ENCODE measurements at regions of chr1 and their contacts with region 1.

Region 1: GRCh38 chr1:119372490-119373086 is 4.0 kb downstream of the HAO2 start:
- DNase-seq: peak; percentile 69
- ATAC-seq: peak; percentile 93
- H3K4me3 Mint-ChIP-seq: no peak overlapping the region
- H3K27ac Mint-ChIP-seq: peak overlapping the region; percentile 3; the same call in 1 of the 2 replicates
- H3K4me1 Mint-ChIP-seq: peaks cover 36% of the 10 kb centered on the region
- H3K27me3 Mint-ChIP-seq: peaks cover 3% of the 10 kb centered on the region; the same call in 1 of the 2 replicates
- CTCF ChIP-seq: no peak

Region 2: DNA sequence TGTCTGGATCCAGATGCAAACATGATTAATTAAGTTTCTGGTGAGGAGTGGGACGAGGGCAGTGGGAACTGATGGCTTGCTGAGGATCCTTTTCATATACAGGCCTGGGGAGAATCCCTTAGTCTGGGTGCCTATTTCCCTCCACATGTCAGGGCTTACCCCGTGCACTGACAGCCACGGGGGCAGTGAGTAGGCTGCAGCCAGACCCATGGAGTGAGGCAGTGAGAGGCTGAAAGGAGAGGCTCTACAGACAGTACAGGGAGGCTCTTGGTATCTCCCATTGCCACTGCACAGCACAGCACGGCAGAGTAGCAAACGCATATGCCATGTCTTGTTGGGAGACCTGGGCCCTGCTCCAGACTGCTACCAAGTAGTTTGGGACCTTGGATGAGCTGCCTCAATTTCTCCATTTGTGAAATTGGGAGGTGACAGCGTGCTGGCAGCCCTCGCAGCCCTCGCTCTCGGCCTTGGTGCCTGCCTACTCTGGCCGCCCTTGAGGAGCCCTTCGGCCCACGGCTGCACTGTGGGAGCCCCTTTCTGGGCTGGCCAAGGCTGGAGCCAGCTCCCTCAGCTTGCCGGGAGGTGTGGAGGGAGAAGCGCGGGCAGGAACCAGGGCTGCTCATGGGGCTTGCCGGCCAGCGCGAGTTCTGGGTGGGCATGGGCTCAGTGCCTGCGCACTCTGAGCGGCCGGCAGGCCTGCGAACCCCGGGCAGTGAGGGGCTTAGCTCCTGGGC is 39.3 kb before region 1 on chr1:
- CTCF ChIA-PET with region 1: no interaction called
- POLR2A ChIA-PET with region 1: no interaction called
- DNase-seq: no peak
- ATAC-seq: no peak
- H3K4me3 Mint-ChIP-seq: no peak overlapping the region
- H3K27ac Mint-ChIP-seq: peak overlapping the region; percentile 99
- H3K4me1 Mint-ChIP-seq: peaks cover 64% of the 10 kb centered on the region
- H3K27me3 Mint-ChIP-seq: peaks cover 3% of the 10 kb centered on the region
- CTCF ChIP-seq: no peak

Region 3: DNA sequence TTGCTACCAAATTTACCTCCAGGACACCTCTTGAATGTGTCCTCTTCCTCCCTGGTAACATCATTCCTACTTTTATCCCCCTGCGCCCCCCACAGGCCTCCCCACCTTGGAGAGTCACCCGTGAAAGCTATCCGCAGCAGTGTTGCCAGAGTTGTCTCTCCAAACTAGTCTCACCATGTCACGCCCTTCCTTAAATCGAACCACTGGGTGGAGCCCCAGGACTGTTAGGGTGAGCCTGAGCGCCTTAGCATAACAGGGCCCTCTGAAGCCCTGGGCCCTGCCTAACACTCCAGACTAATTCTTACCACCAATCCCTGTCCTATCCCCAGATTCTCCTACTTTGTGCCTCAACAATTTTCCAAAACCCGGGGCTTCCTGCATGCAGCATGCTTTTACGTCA is 77.4 kb after region 1 on chr1:
- CTCF ChIA-PET with region 1: interaction called, 14 read pairs
- POLR2A ChIA-PET with region 1: no interaction called
- DNase-seq: peak; percentile 71
- ATAC-seq: peak; percentile 97
- H3K4me3 Mint-ChIP-seq: no peak overlapping the region
- H3K27ac Mint-ChIP-seq: no peak overlapping the region
- H3K4me1 Mint-ChIP-seq: peaks cover 15% of the 10 kb centered on the region
- H3K27me3 Mint-ChIP-seq: peaks cover 4% of the 10 kb centered on the region
- CTCF ChIP-seq: no peak

Region 4: DNA sequence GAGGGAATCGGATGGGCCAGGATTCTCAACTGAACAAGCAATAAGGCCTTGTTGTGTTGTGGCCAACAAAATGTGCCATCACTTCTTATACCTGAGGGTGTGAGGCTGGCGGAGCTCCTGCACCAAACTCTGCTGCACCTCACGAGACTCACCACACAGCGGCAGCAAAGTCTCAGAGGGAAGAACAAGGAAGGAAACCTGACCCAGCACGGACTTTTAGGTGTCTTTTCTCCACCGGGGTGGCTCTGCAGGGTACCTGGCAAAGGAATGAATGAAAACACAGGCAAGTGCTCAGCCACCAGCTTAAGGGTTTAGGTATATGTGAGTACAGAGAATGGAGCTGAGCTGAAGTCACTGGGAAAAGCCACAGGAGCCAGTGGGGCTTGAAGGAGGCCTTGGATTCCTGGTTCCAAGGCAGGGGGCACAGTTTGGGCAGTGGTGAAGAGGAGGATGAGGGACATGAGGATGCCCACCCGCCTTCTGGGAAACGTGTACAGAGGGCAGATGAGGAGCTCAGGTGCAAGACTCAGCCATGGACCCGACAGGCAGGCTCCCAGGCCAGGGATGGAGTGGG is 103.4 kb after region 1 on chr1:
- CTCF ChIA-PET with region 1: interaction called, 23 read pairs
- POLR2A ChIA-PET with region 1: no interaction called
- DNase-seq: peak; percentile 88
- ATAC-seq: peak; percentile 96
- H3K4me3 Mint-ChIP-seq: no peak overlapping the region
- H3K27ac Mint-ChIP-seq: no peak overlapping the region
- H3K4me1 Mint-ChIP-seq: peaks cover 6% of the 10 kb centered on the region
- H3K27me3 Mint-ChIP-seq: peaks cover 2% of the 10 kb centered on the region; the same call in 1 of the 2 replicates
- CTCF ChIP-seq: peak; percentile 64

Region 5: DNA sequence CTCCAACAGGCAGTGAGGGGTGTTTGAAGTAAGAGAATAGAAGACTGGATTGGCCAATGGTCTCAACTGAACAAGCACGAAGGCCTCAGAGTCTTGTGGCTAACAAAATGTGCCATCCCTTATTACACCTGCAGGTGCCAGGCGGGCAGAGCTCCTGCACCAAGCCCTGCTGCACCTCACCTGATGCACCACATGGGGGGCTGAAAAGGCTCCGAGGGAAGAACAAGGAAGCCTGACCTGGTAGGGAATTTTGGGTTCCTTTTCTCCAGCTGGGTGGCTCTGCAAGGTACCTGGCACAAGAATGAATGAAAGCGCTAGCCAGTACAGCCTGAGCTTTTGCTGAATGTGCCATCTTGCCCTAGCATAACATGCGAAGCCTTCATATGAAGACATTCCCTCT is 144.1 kb after region 1 on chr1:
- CTCF ChIA-PET with region 1: interaction called, 13 read pairs
- POLR2A ChIA-PET with region 1: no interaction called
- DNase-seq: peak; percentile 61
- ATAC-seq: peak; percentile 97
- H3K4me3 Mint-ChIP-seq: no peak overlapping the region
- H3K27ac Mint-ChIP-seq: no peak overlapping the region
- H3K4me1 Mint-ChIP-seq: no peaks in the 10 kb centered on the region
- H3K27me3 Mint-ChIP-seq: peaks cover 5% of the 10 kb centered on the region; the same call in 1 of the 2 replicates
- CTCF ChIP-seq: peak; percentile 35; the same call in 1 of the 2 replicates

Region 6: DNA sequence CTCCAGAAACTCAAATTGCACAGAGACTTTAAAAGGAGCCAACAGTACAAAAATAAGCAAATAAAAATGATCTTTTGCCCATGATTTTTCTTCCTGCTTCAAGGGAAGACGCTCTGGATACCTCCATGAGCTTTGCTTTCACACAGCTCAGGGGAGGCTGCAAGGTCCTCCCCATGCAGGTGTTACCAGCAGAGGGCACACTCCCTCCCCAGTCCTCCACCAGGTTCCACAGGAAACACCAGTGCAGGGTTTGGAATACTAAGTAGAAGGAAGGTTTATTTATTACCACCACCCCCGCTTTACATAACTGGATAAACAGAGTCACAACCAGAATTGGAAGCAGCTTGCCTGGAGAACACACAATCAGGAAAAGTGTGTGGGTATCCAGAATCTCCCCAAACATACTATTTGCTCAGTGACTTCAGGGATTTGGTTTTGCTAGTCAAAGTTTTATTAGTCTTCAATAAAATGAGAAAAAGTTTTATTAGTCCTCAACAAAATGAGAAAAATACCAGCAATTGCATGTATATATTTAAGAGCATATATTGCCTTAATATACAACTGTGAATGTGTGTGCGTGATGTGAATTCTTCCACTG is 171.7 kb after region 1 on chr1:
- CTCF ChIA-PET with region 1: interaction called, 24 read pairs
- POLR2A ChIA-PET with region 1: no interaction called
- DNase-seq: peak; percentile 73
- ATAC-seq: peak; percentile 92
- H3K4me3 Mint-ChIP-seq: no peak overlapping the region
- H3K27ac Mint-ChIP-seq: no peak overlapping the region
- H3K4me1 Mint-ChIP-seq: 0 out of 2 replicates have a peak, but pooled peaks cover 2% of the 10 kb centered on the region
- H3K27me3 Mint-ChIP-seq: no peaks in the 10 kb centered on the region
- CTCF ChIP-seq: 0 out of 2 replicates have a peak, but pooled peaks have one; percentile 29

Region 7: DNA sequence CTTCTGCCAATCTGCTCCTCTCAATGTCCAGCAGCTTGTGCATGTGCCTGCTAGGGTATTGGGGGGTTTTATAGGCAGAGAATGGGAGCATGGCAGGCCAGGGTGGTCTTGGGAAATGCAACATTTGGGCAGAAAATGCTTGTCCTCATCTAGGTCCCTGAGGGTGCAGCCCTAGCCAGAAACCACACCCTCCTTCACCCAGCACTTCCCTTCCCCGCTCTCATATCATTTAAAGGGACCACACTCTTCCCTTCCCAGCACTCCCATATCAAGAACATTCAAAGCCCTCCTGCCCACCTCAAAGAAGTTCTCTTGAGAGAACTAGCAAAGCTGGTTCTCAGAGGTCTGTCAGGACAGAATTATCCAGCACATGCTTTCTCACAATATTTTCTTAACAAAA is 196.5 kb after region 1 on chr1:
- CTCF ChIA-PET with region 1: no interaction called
- POLR2A ChIA-PET with region 1: no interaction called
- DNase-seq: no peak
- ATAC-seq: no peak
- H3K4me3 Mint-ChIP-seq: no peak overlapping the region
- H3K27ac Mint-ChIP-seq: no peak overlapping the region
- H3K4me1 Mint-ChIP-seq: peaks cover 6% of the 10 kb centered on the region; the same call in 1 of the 2 replicates
- H3K27me3 Mint-ChIP-seq: 0 out of 2 replicates have a peak, but pooled peaks cover 9% of the 10 kb centered on the region
- CTCF ChIP-seq: no peak